CD8-positive, alpha-beta T cell (primary cell): ENCODE measurements at regions of chrX and their contacts with region 1.

Region 1: GRCh38 chrX:110268886-110269285 is 49.0 kb downstream of the AMMECR1 start:
- DNase-seq: no peak
- ATAC-seq: no peak
- H3K4me3 ChIP-seq: no peak overlapping the region
- H3K4me3 Mint-ChIP-seq: no peak overlapping the region
- H3K27ac ChIP-seq: no peak overlapping the region
- H3K27ac Mint-ChIP-seq: peak overlapping the region; percentile 60
- H3K4me1 ChIP-seq: peaks cover 20% of the 10 kb centered on the region
- H3K4me1 Mint-ChIP-seq: peaks cover 45% of the 10 kb centered on the region
- H3K27me3 ChIP-seq: no peaks in the 10 kb centered on the region
- H3K27me3 Mint-ChIP-seq: no peaks in the 10 kb centered on the region
- CTCF ChIP-seq: no peak

Region 2: GRCh38 chrX:110210417-110211139 is 58.3 kb before region 1 on chrX:
- CTCF ChIA-PET with region 1: no interaction called
- POLR2A ChIA-PET with region 1: interaction called, 5 read pairs
- intact Hi-C with region 1: loop called in 1 of 2 experiments (anchors 10 kb)
- DNase-seq: no peak
- ATAC-seq: no peak
- H3K4me3 ChIP-seq: no peak overlapping the region
- H3K4me3 Mint-ChIP-seq: no peak overlapping the region
- H3K27ac ChIP-seq: no peak overlapping the region
- H3K27ac Mint-ChIP-seq: no peak overlapping the region
- H3K4me1 ChIP-seq: no peaks in the 10 kb centered on the region
- H3K4me1 Mint-ChIP-seq: peaks cover 5% of the 10 kb centered on the region
- H3K27me3 ChIP-seq: no peaks in the 10 kb centered on the region
- H3K27me3 Mint-ChIP-seq: no peaks in the 10 kb centered on the region
- CTCF ChIP-seq: no peak